B cell (primary cell): ENCODE measurements at regions of chr6 and their contacts with region 1.

Region 1: DNA sequence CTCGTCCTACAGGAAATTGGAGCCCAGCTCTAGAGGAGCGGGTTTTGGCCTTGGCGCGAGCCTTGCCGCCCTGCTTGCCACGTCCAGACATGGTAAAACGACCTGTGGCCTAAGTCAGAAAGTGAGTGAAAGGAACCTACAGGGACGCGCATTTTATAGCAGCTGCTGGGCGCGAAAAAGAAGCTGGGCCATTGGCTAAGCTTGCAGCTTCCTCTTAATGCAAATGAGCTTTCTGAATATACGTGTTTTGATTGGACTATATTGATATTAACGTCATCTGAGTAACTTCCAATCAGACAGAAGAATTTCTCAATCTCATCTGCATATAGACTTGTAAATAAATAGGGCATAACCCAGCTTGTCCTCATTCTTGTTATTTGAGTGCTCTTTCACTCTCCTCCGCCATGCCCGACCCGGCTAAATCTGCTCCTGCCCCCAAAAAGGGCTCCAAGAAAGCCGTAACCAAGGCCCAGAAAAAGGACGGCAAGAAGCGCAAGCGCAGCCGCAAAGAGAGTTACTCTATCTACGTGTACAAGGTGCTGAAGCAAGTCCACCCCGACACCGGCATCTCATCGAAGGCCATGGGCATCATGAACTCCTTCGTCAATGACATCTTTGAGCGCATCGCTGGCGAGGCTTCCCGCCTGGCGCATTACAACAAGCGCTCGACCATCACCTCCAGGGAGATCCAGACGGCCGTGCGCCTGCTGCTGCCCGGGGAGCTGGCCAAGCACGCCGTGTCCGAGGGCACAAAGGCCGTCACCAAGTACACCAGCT is 18.9 kb downstream of the OR2B2 start:
- DNase-seq: peak; percentile 97
- ATAC-seq: peak; percentile 67
- H3K4me3 ChIP-seq: peak overlapping the region; percentile 68 to 100 (median 88)
- H3K4me3 Mint-ChIP-seq: no peak overlapping the region
- H3K27ac ChIP-seq: peak overlapping the region; percentile 76 to 77
- H3K27ac Mint-ChIP-seq: no peak overlapping the region
- H3K4me1 ChIP-seq: peaks cover 18 to 38% of the 10 kb centered on the region in 2 donors
- H3K4me1 Mint-ChIP-seq: peaks cover 36% of the 10 kb centered on the region
- H3K27me3 ChIP-seq: no peaks in the 10 kb centered on the region
- H3K27me3 Mint-ChIP-seq: no peaks in the 10 kb centered on the region
- CTCF ChIP-seq: no peak

Region 2: GRCh38 chr6:26196846-26197648 is 1696.2 kb before region 1 on chr6:
- CTCF ChIA-PET with region 1: no interaction called
- POLR2A ChIA-PET with region 1: interaction called, 20 read pairs
- intact Hi-C with region 1: no loop called
- DNase-seq: peak; percentile 95
- ATAC-seq: peak; percentile 55
- H3K4me3 ChIP-seq: peak overlapping the region; percentile 78 to 100 (median 90)
- H3K4me3 Mint-ChIP-seq: peak overlapping the region; percentile 91
- H3K27ac ChIP-seq: peak overlapping the region; percentile 78 to 95
- H3K27ac Mint-ChIP-seq: peak overlapping the region; percentile 96
- H3K4me1 ChIP-seq: peaks cover 16 to 31% of the 10 kb centered on the region in 2 donors
- H3K4me1 Mint-ChIP-seq: peaks cover 41% of the 10 kb centered on the region
- H3K27me3 ChIP-seq: no peaks in the 10 kb centered on the region
- H3K27me3 Mint-ChIP-seq: no peaks in the 10 kb centered on the region
- CTCF ChIP-seq: no peak

Region 3: DNA sequence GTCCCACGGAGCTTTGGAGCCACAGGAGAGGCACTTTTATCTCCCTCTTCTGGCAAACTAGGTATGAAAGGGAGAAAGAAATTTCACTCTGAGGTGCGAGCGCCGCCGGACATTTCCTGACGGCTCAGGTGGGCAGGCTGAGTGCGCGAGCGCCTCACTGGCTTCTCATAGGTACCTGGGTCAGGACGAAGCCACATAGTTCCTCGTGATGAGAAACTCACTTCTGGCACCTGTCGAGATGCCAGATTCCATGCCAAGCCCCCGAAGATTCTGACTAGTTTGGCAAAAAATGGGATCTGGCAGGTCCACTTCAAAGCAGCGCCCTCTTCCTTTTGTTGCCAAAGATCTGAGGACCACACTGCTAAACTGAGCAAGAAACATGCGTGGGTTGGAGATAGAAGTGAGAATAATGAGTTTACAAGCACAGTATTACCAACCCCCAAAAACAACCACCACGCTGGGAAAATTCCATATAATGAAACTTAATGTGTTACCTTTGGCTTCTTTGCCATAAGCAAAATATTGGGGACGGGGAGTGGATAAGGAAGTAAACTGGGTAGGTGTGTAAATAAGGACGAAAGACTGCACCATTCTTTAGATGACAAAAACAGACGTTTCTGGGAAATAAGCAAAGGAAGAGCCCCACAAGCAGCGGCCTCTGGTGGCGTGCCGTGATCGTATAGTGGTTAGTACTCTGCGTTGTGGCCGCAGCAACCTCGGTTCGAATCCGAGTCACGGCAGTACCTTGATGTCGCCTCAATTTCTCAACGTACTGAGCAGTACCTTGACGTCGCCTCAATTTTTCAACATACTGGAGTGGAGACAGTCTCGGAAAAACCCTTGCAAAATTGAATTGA is 735.6 kb before region 1 on chr6:
- CTCF ChIA-PET with region 1: interaction called, 18 read pairs
- POLR2A ChIA-PET with region 1: no interaction called
- intact Hi-C with region 1: loop called (anchors 1 kb)
- DNase-seq: peak; percentile 91
- ATAC-seq: peak; percentile 77
- H3K4me3 ChIP-seq: peak overlapping the region; percentile 59 to 91 (median 72)
- H3K4me3 Mint-ChIP-seq: peak overlapping the region; percentile 94
- H3K27ac ChIP-seq: peak overlapping the region; percentile 18 to 45
- H3K27ac Mint-ChIP-seq: peak overlapping the region; percentile 85
- H3K4me1 ChIP-seq: peaks cover 17 to 20% of the 10 kb centered on the region in 2 donors
- H3K4me1 Mint-ChIP-seq: peaks cover 25% of the 10 kb centered on the region
- H3K27me3 ChIP-seq: no peaks in the 10 kb centered on the region
- H3K27me3 Mint-ChIP-seq: no peaks in the 10 kb centered on the region
- CTCF ChIP-seq: peak; percentile 64

Region 4: DNA sequence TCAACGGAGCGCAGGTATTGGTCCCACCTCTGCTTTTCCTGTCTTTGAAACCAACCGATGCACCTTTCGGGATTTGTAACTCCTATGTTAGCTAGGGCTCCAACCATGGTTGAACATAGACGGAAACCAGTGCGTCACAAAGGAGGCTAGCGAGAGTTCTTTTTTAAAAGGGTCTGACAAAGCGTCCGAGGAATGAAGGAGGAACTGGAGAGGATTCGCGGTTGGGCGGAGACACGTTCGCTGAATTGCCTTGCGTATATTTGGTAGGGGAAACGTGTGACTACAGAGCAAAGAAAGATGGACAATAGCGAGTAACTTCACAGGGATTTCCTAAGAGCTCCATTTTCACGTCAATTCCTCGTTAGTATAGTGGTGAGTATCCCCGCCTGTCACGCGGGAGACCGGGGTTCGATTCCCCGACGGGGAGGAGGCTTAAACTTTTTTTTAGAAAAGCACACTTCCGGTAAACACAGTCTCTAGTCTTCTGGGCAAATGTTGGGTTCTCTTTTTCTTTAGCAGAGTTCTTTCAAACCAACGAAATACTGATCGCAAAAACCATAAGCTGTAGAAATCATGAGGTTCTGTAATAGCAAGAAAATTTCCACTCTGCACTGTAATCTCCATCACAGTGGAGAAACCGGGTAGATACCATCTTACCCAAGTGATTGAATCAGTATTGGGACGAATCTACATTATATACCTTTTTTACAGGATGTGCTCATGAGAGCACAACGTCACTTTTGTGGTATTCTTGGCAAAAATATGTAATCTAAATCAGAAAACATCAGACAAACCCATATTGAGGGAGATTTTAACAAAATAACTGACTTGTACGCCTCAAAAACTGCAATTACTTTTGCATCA is 413.7 kb before region 1 on chr6:
- CTCF ChIA-PET with region 1: interaction called, 3 read pairs
- POLR2A ChIA-PET with region 1: interaction called, 7 read pairs
- intact Hi-C with region 1: loop called (anchors 2 kb)
- DNase-seq: peak; percentile 96
- ATAC-seq: peak; percentile 77
- H3K4me3 ChIP-seq: peak overlapping the region; percentile 88 to 97 (median 95)
- H3K4me3 Mint-ChIP-seq: no peak overlapping the region
- H3K27ac ChIP-seq: peak overlapping the region; percentile 98
- H3K27ac Mint-ChIP-seq: no peak overlapping the region
- H3K4me1 ChIP-seq: peaks cover 15 to 17% of the 10 kb centered on the region in 2 donors
- H3K4me1 Mint-ChIP-seq: peaks cover 6% of the 10 kb centered on the region
- H3K27me3 ChIP-seq: no peaks in the 10 kb centered on the region
- H3K27me3 Mint-ChIP-seq: no peaks in the 10 kb centered on the region
- CTCF ChIP-seq: no peak

Region 5: DNA sequence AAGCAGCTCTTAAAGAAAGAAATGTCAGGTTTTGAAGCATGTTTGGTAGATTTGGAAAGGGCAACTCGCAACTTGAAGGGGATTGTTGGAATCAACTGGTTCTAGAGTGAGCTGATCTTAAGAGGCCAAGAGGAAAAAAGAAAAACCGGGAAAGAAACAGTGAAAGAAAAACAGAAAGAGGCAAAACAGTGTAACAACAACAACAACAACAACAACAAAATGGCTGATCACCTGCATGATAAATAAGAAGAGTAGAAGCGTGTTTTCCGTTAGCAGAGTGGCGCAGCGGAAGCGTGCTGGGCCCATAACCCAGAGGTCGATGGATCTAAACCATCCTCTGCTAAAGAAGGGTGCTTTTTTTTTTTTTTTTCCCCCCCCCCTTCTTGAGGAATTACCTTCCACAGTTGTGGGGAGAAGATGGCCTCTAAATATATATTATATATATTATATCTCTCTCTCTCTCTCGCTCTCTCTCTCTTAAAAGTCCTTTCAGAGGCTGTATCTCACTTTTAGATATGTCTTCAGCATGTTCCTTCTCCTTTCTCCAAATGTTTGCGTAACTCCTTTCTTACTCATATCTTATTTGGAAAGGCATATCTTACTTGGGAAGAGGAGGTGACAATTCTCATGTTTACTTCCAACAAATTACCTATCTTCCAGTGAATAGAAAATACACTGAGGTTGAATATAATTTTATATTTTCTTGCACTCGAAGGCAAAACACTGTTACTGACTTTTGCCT is 115.5 kb before region 1 on chr6:
- CTCF ChIA-PET with region 1: interaction called, 150 read pairs
- POLR2A ChIA-PET with region 1: interaction called, 5 read pairs
- intact Hi-C with region 1: loop called (anchors 1 kb)
- DNase-seq: no peak
- ATAC-seq: no peak
- H3K4me3 ChIP-seq: no peak overlapping the region
- H3K4me3 Mint-ChIP-seq: no peak overlapping the region
- H3K27ac ChIP-seq: no peak overlapping the region
- H3K27ac Mint-ChIP-seq: no peak overlapping the region
- H3K4me1 ChIP-seq: peaks cover 15 to 16% of the 10 kb centered on the region in 2 donors
- H3K4me1 Mint-ChIP-seq: peaks cover 22% of the 10 kb centered on the region
- H3K27me3 ChIP-seq: peaks cover 0 to 4% (median 2%) of the 10 kb centered on the region in 4 experiments
- H3K27me3 Mint-ChIP-seq: peaks cover 17% of the 10 kb centered on the region
- CTCF ChIP-seq: no peak

Region 6: GRCh38 chr6:27871924-27872638 is 21.2 kb before region 1 on chr6:
- CTCF ChIA-PET with region 1: interaction called, 92 read pairs
- POLR2A ChIA-PET with region 1: interaction called, 93 read pairs
- intact Hi-C with region 1: loop called (anchors 1 kb)
- DNase-seq: peak; percentile 98
- ATAC-seq: peak; percentile 76
- H3K4me3 ChIP-seq: peak overlapping the region; percentile 66 to 99 (median 76)
- H3K4me3 Mint-ChIP-seq: peak overlapping the region; percentile 84
- H3K27ac ChIP-seq: peak overlapping the region; percentile 79 to 88
- H3K27ac Mint-ChIP-seq: peak overlapping the region; percentile 98
- H3K4me1 ChIP-seq: peaks cover 20 to 34% of the 10 kb centered on the region in 2 donors
- H3K4me1 Mint-ChIP-seq: peaks cover 30% of the 10 kb centered on the region
- H3K27me3 ChIP-seq: no peaks in the 10 kb centered on the region
- H3K27me3 Mint-ChIP-seq: no peaks in the 10 kb centered on the region
- CTCF ChIP-seq: peak; percentile 56